Left colon (tissue), 2 donors: ENCODE measurements at regions of chr2 and their contacts with region 1.

Region 1: DNA sequence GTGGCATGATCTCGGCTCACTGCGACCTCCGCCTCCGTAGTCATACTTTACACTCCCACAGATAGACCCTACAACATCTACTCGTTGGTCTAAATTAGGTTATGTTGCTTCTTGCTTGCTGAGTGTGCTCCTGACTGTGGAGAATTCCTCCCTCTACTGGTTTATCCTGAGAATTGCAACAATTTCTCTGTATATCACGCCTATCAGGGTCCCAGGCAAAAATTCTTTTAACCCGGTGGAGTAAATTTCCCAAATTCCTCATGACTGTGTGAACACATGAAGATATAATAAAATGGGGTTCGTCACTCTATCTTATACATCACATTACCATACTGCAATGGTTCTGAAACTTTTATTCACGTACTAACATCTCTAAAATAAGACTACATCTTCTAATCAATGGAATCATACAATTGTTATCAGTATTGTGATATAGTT is 156.7 kb downstream of the EVA1A start:
- DNase-seq: no peak
- ATAC-seq: peak; percentile 53

Region 2: GRCh38 chr2:74919827-74920226 is 484.2 kb before region 1 on chr2:
- intact Hi-C with region 1: loop called in 1 of 2 experiments (anchors 5 kb)
- DNase-seq: peak; percentile 41 to 69
- ATAC-seq: peak; percentile 74

Region 3: GRCh38 chr2:75064691-75065396 is 339.2 kb before region 1 on chr2:
- intact Hi-C with region 1: loop called in 1 of 2 experiments (anchors 10 kb)
- DNase-seq: peak in 1 of 2 donors; percentile 57
- ATAC-seq: peak; percentile 69

Region 4: DNA sequence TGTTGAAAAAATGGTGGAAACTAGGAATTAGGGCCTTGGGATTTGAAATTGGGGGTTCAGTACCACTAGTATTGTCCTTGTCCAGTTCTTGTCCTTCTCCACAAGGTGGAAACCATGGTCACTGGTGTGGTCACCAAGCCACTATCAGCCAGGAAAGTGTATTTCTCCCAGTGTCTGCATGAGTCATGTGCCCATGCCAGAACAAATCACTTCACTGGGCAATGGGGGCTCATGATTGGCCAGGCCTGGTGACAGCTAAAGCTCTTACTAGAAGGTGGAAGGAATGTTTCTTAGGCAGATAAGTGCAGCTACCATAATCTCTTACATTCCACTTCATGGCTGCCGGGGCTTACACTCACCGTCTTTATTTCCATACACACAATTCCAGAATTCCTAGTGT is 79.9 kb before region 1 on chr2:
- intact Hi-C with region 1: no loop called
- DNase-seq: no peak
- ATAC-seq: no peak